ENCODE measurements at regions of chrX and their contacts with region 1.

Region 1: DNA sequence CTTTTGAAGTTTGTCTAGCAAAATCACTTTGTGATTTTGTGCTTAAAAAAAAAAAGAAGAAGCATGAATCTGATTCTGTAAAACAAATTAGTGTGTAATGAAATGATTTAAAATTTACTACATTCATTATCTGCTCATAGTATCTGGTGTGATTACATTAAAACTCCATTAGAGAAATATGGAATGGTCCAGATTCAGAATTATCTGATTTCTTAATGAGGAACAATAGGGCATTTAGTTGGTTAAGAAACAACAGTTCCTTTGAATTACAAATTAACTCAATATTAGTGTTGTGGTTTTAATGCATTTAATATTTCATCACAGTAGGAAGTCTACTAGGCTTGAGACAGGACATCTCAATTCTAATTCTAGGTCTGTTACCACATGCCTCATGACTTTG is 57.9 kb upstream of the PDHA1 start:
- DNase-seq: no peak
- H3K4me3 ChIP-seq: no peak overlapping the region
- H3K27ac ChIP-seq: no peak overlapping the region
- H3K4me1 ChIP-seq: no peaks in the 10 kb centered on the region
- H3K27me3 ChIP-seq: no peaks in the 10 kb centered on the region
- CTCF ChIP-seq: no peak
- EP300 ChIP-seq: no peak
- POLR2A ChIP-seq: no peak

Region 2: GRCh38 chrX:19121898-19122640 is 163.8 kb before region 1 on chrX and contains the start of gene ADGRG2:
- in situ Hi-C with region 1: no loop called
- intact Hi-C with region 1: no loop called
- DNase-seq: peak; percentile 7
- H3K4me3 ChIP-seq: peak within 1 kb of the TSS in 3 of 4 donors; percentile 25 to 54 (median 37)
- H3K27ac ChIP-seq: no peak within 1 kb of the TSS
- H3K4me1 ChIP-seq: no peaks in the 10 kb centered on the region
- H3K27me3 ChIP-seq: peaks cover 37% of the 10 kb centered on the region
- CTCF ChIP-seq: no peak
- EP300 ChIP-seq: no peak
- POLR2A ChIP-seq: no peak
- total RNA-seq, gene ADGRG2: 0.41 to 0.64 TPM in 2 of 4 donors, not detected in the others

Region 3: DNA sequence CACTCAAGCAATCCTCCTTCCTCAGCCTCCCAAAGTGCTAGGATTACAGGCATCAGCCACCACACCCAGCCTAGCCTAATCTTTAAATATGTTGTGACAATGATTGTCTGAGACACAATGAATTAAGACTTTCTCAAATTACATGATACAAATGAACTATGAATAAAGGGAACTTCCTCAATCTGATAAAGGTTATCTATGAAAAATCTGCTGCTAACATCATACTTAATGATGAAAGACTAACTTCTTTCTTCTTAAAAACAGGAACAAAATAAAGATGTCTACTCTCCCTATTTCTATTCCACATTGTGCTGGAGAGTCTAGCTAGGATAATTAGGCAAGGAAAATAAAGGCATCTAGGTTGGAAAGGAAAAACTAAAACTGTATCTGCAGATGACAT is 117.8 kb after region 1 on chrX:
- in situ Hi-C with region 1: no loop called
- intact Hi-C with region 1: no loop called
- DNase-seq: no peak
- H3K4me3 ChIP-seq: no peak overlapping the region
- H3K27ac ChIP-seq: no peak overlapping the region
- H3K4me1 ChIP-seq: no peaks in the 10 kb centered on the region
- H3K27me3 ChIP-seq: no peaks in the 10 kb centered on the region
- CTCF ChIP-seq: no peak
- EP300 ChIP-seq: no peak
- POLR2A ChIP-seq: no peak

Region 4: GRCh38 chrX:19613645-19614323 is 327.9 kb after region 1 on chrX:
- in situ Hi-C with region 1: no loop called
- intact Hi-C with region 1: no loop called
- DNase-seq: peak; percentile 53
- H3K4me3 ChIP-seq: no peak overlapping the region
- H3K27ac ChIP-seq: no peak overlapping the region
- H3K4me1 ChIP-seq: peaks cover 0 to 4% (median 0%) of the 10 kb centered on the region in 4 donors
- H3K27me3 ChIP-seq: no peaks in the 10 kb centered on the region
- CTCF ChIP-seq: no peak
- EP300 ChIP-seq: no peak
- POLR2A ChIP-seq: no peak

Region 5: GRCh38 chrX:20333672-20334071 is 1047.8 kb after region 1 on chrX:
- in situ Hi-C with region 1: no loop called
- intact Hi-C with region 1: loop called (anchors 5 kb)
- DNase-seq: no peak
- H3K4me3 ChIP-seq: no peak overlapping the region
- H3K27ac ChIP-seq: no peak overlapping the region
- H3K4me1 ChIP-seq: no peaks in the 10 kb centered on the region
- H3K27me3 ChIP-seq: no peaks in the 10 kb centered on the region
- CTCF ChIP-seq: no peak
- EP300 ChIP-seq: no peak
- POLR2A ChIP-seq: no peak

Measured in transverse colon (tissue), 4 donors.